PC-3 (cell line): ENCODE measurements at regions of chr12 and their contacts with region 1.

Region 1: DNA sequence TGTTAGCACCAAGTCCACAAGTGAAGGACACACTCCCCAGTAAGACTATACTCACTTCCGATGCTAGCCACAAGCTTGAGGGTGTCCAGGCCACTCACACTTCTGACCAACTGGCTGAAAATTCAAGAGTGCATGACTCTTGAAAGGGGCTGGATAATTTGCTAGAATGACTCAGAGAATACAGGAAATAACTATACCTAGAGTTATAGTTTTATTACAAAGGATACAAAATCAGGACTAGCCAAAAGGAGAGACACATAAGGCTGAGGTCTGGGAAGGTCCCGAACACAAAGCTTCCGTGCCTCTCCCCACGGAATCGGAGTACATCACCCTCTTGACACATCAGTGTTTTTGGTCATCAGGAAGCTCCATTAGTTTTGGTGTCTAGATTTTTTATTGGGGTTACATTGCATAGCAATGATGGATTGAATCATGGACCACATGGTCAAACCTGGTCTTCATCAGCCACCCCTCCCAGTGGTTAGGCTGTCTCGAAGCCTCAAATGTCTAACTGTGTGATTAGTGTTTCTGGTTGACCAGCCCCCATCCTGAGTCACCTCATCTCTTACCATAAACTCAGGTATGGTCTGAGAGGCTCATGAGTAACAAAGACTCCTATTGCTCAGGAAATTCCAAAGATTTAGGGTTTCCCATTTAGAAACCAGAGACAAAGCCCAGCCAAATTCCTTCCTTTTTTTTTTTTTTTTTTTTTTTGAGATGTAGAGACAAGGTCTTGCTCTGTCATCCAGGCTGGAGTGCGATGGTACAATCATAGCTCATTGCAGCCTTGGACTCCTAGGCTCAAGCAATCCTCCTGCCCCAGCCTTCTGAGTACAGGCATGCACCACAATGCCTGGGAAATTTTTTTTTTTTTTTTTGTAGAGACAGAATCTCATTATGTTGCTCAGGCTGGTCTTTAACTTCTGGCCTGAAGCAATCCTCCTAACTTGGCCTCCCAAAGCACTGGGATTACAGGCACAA is 472.0 kb upstream of the TBX3 start:
- DNase-seq: peak; percentile 99
- ATAC-seq: peak; percentile 91
- H3K4me3 ChIP-seq: no peak overlapping the region
- H3K27ac ChIP-seq: peak overlapping the region; percentile 96
- H3K4me1 ChIP-seq: peaks cover 21% of the 10 kb centered on the region
- H3K27me3 ChIP-seq: no peaks in the 10 kb centered on the region
- CTCF ChIP-seq: no peak

Region 2: GRCh38 chr12:114668151-114668885 is 487.6 kb before region 1 on chr12:
- CTCF ChIA-PET with region 1: no interaction called
- POLR2A ChIA-PET with region 1: no interaction called
- intact Hi-C with region 1: loop called (anchors 2 kb)
- DNase-seq: peak; percentile 98
- ATAC-seq: peak; percentile 45
- H3K4me3 ChIP-seq: peak overlapping the region; percentile 94
- H3K27ac ChIP-seq: peak overlapping the region; percentile 89
- H3K4me1 ChIP-seq: peaks cover 77% of the 10 kb centered on the region
- H3K27me3 ChIP-seq: no peaks in the 10 kb centered on the region
- CTCF ChIP-seq: peak; percentile 75

Region 3: DNA sequence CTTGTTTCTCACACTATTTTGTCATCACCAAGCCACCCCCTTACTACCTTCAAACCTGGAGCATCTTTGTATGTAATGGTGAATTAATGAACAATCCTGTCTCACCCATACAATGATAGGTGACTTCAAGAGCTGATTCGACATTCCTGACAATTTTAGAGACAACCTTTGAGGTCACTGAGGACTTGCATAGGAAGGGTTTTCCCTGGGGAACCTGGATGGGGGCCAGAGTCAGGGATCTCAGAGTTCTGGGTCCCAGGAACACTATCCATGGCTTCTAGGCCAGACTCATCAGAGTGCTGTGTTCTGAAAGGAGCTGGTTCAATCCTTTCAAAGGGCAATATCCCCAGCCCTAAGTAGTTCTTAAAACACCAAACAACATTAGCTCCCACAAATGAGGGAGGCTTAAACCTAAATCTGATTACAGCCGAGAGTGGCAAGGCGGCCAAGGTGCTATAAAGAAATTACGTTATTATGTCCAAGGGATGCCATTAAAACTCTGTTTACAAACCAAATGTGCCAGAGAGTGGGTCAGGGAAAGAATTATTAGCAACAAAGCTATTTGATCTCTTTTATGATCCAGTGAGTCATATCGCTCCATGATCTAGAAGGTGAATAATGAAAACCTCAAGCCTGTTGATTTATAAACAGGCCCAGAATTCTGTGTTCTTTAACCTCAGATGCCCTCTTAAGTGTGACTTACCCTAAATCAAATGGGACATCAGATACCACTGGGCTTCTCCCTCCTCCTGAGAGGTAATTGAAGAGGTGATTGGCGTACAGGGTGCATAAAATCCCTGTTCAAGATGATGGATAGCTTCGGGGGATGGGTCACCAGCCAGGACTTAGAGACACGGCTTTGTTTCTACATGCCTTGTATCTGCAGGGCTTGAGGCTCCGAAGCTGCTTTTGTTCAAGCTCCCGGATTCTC is 241.8 kb before region 1 on chr12:
- CTCF ChIA-PET with region 1: no interaction called
- POLR2A ChIA-PET with region 1: no interaction called
- intact Hi-C with region 1: loop called (anchors 5 kb)
- DNase-seq: peak; percentile 94
- ATAC-seq: peak; percentile 50
- H3K4me3 ChIP-seq: no peak overlapping the region; the same call in 1 of the 2 replicates
- H3K27ac ChIP-seq: peak overlapping the region; percentile 57
- H3K4me1 ChIP-seq: peaks cover 67% of the 10 kb centered on the region
- H3K27me3 ChIP-seq: no peaks in the 10 kb centered on the region
- CTCF ChIP-seq: no peak

Region 4: DNA sequence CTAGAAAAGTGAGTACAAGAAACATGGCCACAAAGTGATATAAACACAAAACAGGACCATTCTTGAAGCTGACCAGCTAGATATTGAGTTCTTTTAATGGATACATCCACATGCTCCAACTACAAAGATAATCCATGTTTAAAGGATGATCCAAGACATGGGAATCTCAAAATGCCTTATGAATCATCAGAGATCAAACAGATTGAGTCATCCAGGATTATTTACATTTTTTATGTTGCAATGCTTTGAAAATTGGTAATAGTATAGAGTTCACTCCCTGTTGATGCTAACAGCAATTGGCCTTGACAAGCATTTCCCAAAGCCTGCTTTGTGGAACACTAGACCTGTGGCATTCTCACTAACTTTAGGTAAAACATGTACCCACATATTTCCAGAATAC is 179.0 kb before region 1 on chr12:
- CTCF ChIA-PET with region 1: no interaction called
- POLR2A ChIA-PET with region 1: no interaction called
- intact Hi-C with region 1: loop called (anchors 1 kb)
- DNase-seq: peak; percentile 97
- ATAC-seq: peak; percentile 93
- H3K4me3 ChIP-seq: no peak overlapping the region
- H3K27ac ChIP-seq: peak overlapping the region; percentile 81
- H3K4me1 ChIP-seq: peaks cover 26% of the 10 kb centered on the region
- H3K27me3 ChIP-seq: no peaks in the 10 kb centered on the region
- CTCF ChIP-seq: no peak

Region 5: DNA sequence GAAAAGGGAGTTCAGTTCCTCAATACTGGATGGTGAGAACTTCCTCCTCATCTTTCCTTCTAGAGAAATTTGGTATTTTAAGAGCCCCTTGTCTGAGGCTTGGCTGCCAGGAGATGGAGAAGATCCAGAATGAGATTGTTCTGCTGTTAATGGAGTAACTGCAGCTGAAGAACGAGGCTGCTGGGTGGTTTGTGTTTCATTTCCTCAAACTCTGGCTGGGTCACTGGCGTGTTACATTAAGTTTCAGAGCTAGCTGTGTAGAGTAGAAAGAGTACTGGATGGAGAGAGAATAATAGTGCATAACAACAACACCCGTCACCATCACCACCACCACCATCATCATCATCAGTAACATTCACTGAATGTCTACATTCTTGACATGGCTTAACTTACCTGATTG is 147.0 kb before region 1 on chr12:
- CTCF ChIA-PET with region 1: no interaction called
- POLR2A ChIA-PET with region 1: no interaction called
- intact Hi-C with region 1: loop called (anchors 2 kb)
- DNase-seq: no peak
- ATAC-seq: no peak
- H3K4me3 ChIP-seq: no peak overlapping the region
- H3K27ac ChIP-seq: no peak overlapping the region
- H3K4me1 ChIP-seq: peaks cover 51% of the 10 kb centered on the region
- H3K27me3 ChIP-seq: no peaks in the 10 kb centered on the region
- CTCF ChIP-seq: no peak

Region 6: DNA sequence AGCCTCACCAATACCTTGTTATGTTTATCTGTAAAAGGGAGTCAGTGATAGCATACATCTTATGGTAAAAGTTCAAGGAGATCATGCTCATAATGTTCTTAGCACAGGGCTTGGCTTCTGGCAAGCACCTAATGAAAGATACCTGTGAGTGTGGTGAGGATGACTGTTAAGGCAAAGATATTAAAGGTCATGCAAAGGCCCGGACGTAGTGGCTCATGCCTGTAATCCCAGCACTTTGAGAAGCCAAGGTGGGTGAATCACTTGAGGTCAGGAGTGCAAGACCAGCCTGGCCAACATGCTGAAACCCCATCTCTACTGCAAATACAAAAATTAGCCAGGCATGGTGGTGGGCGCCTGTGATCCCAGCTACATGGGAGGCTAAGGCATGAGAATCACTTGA is 46.1 kb before region 1 on chr12:
- CTCF ChIA-PET with region 1: no interaction called
- POLR2A ChIA-PET with region 1: interaction called, 15 read pairs
- intact Hi-C with region 1: no loop called
- DNase-seq: peak; percentile 28
- ATAC-seq: no peak
- H3K4me3 ChIP-seq: no peak overlapping the region
- H3K27ac ChIP-seq: no peak overlapping the region
- H3K4me1 ChIP-seq: no peaks in the 10 kb centered on the region
- H3K27me3 ChIP-seq: no peaks in the 10 kb centered on the region
- CTCF ChIP-seq: no peak

Region 7: DNA sequence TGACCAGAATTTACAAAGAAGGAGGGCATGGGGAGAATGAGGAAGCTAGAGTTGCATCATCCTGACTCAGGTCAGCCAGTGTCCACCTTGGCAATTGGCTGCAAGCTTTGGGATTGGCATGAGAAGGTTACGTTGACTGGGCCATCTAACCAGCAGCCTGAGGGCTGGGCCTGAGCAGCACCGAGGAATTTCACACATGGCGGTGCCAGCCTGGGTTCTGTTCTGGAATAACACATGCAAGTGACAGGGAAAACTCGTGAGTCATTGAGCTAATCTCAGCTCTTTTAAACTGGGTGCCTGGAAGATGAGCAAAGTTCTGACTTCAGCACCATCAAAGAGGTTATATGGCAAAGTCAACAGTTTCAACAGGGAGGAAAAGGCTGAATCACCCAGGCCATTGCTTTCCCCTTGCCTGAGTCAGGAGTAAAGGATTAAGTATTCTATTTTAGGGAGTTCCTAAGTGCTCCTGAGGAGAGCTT is 71.2 kb after region 1 on chr12:
- CTCF ChIA-PET with region 1: interaction called, 11 read pairs
- POLR2A ChIA-PET with region 1: no interaction called
- intact Hi-C with region 1: loop called (anchors 1 kb)
- DNase-seq: peak; percentile 98
- ATAC-seq: peak; percentile 95
- H3K4me3 ChIP-seq: no peak overlapping the region
- H3K27ac ChIP-seq: peak overlapping the region; percentile 82
- H3K4me1 ChIP-seq: peaks cover 37% of the 10 kb centered on the region
- H3K27me3 ChIP-seq: no peaks in the 10 kb centered on the region
- CTCF ChIP-seq: no peak

Region 8: GRCh38 chr12:115383669-115384068 is 227.7 kb after region 1 on chr12:
- CTCF ChIA-PET with region 1: no interaction called
- POLR2A ChIA-PET with region 1: no interaction called
- intact Hi-C with region 1: no loop called
- DNase-seq: peak; percentile 97
- ATAC-seq: peak; percentile 95
- H3K4me3 ChIP-seq: no peak overlapping the region
- H3K27ac ChIP-seq: peak overlapping the region; percentile 79
- H3K4me1 ChIP-seq: peaks cover 23% of the 10 kb centered on the region
- H3K27me3 ChIP-seq: no peaks in the 10 kb centered on the region
- CTCF ChIP-seq: no peak